ENCODE measurements at regions of chr11 and their contacts with region 1.

Region 1: DNA sequence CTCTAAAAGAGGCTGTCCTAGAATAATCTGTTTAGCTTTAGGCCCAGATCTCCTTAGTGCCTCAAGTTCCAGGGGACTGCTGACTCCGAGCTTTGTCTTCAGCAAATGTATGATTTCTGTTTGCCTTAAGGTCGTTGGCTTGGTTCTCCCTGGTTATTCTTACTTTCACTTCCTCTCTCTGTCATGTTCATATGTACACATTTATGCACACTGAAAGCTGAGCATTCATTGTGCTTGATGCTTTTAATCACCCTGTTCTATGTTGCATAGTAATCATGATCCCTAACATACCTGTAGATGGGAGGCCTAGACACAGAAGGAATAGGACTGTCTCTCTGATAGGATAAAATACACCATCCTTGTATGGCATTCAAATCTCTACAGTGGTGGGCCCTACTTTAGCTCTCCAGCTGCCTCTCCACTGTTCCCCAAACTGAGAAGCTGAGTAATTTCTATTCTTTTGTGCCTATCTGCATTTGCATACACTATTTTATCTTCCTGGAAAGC is 7.2 kb downstream of the PPFIBP2 start:
- DNase-seq: no peak
- ATAC-seq: peak; percentile 78
- H3K4me3 ChIP-seq: peak overlapping the region; percentile 71
- H3K27ac ChIP-seq: peak overlapping the region; percentile 100
- H3K4me1 ChIP-seq: peaks cover 58% of the 10 kb centered on the region
- H3K27me3 ChIP-seq: no peaks in the 10 kb centered on the region
- CTCF ChIP-seq: no peak
- EP300 ChIP-seq: peak in 1 of 2 experiments; percentile 70; a peak in 1 of 4 replicates
- POLR2A ChIP-seq: peak; percentile 50; the same call in 1 of the 2 replicates
- RAD21 ChIP-seq: no peak

Region 2: DNA sequence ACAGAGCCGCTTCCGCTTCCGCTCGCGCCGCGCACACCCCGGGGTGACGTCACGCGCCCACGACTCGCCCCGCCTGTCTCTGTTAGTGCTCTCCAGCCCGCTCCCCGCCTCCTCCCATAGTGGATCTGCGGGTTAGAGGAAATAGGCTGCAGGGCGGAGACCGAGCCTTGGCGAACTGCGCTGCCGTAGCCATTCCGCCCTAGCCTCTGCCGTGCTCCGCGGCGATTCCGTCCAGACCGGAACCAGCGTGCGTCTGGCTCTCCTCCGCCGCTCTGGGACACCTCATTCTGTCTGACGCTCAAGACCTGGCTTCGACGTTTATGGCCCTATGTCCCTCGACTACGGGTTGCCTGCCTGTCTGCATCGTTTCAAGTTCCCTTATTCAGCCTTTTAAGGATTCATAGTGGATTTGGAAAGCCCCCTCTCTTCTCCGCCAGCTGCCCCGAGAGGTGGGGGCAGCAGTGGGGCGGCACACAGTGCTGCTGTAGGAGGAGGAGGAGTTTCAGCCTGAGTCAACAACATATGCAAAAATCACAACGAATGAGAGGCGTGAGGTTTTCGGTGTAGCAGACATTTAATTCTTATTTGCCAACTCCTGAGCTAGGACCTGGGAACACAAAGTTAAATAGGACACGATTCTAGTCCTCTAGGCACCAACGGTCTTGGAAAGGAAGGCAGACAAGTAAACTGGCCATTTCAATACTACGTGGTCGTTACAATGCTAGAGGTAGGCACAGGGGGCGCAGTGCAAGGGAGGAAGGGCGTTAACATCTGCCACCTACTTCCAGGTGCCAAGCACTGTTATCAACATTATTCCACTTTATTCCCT is 908.6 kb before region 1 on chr11 and contains the start of gene TAF10:
- CTCF ChIA-PET with region 1: interaction called, 3 read pairs
- POLR2A ChIA-PET with region 1: no interaction called
- RAD21 ChIA-PET with region 1: no interaction called
- SMC1A ChIA-PET with region 1: no interaction called
- in situ Hi-C with region 1: loop called (anchors 10 kb)
- intact Hi-C with region 1: loop called (anchors 10 kb)
- DNase-seq: peak; percentile 77
- ATAC-seq: peak; percentile 92
- H3K4me3 ChIP-seq: peak within 1 kb of the TSS; percentile 87
- H3K27ac ChIP-seq: peak within 1 kb of the TSS; percentile 99
- H3K4me1 ChIP-seq: peaks cover 25% of the 10 kb centered on the region
- H3K27me3 ChIP-seq: no peaks in the 10 kb centered on the region
- CTCF ChIP-seq: peak; percentile 30 to 62 (median 42); a peak in 5 of 6 replicates
- EP300 ChIP-seq: no peak
- POLR2A ChIP-seq: peak; percentile 96
- RAD21 ChIP-seq: no peak
- polyA plus RNA-seq, gene TAF10: 27.2 to 78.9 TPM

Region 3: DNA sequence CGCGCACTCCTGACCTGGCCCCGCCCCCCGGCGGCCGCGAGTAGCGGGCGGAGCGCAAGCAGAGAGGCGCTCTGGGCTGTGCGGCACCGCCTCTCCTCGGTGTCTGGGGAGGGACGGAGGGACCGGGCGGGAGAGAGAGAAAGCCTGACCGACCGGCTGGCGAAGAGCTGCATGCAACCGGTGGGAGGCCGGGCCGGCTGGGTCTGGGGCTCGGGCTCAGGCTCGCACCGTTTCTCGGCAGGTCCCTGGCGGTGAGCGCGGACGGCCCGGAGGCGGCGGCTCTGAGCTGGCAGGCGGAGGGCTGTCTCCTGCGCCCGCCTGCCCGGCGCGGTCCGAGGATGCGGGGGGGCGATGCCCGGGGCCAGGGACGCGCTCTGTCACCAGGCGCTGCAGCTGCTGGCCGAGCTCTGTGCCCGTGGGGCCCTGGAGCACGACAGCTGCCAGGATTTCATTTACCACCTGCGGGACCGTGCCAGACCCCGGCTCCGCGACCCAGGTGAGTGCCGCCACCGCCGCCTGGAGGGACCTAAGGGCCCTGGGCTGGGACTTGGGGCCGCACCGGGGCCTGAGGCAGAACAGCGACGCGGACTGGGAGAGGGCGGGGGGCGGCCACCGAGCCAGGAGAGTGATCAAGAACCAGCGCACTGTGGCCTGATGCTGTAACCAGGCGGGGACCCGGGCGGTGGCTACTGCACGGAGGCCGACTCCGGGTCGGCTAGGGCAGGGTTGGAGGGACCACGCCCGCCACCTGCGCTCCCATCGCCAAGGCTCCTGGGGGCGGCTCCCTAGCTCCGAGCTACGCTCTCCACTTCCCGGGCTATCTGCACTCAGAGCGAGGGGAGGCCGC is 269.0 kb before region 1 on chr11 and contains the start of gene SYT9:
- CTCF ChIA-PET with region 1: no interaction called
- POLR2A ChIA-PET with region 1: no interaction called
- RAD21 ChIA-PET with region 1: no interaction called
- SMC1A ChIA-PET with region 1: no interaction called
- in situ Hi-C with region 1: no loop called
- intact Hi-C with region 1: no loop called
- DNase-seq: no peak
- ATAC-seq: peak; percentile 72
- H3K4me3 ChIP-seq: no peak within 1 kb of the TSS
- H3K27ac ChIP-seq: no peak within 1 kb of the TSS
- H3K4me1 ChIP-seq: no peaks in the 10 kb centered on the region
- H3K27me3 ChIP-seq: peaks cover 8 to 20% of the 10 kb centered on the region in 2 experiments
- CTCF ChIP-seq: no peak
- EP300 ChIP-seq: no peak
- POLR2A ChIP-seq: no peak
- RAD21 ChIP-seq: no peak
- polyA plus RNA-seq, gene SYT9: 0.03 TPM in 1 of 2 experiments, not detected in the other

Region 4: DNA sequence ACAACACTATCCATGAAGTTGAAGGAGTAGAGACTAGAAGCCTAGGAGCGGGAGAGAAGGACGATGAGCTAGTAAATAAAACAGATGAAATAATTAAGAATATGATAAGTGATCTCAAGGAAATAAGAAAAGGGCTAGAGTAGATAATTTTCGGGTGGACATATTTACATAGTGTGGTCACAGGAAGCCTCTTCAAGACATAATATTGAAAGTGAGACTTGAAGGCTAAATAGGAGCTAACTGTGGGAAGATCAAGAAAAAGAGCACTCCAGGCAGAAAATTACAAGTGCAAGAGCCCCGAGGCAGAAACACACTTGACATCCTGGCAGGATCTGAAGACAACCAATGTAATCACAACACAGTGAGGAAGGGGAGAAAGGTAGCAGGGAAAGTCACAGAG is 19.1 kb before region 1 on chr11:
- CTCF ChIA-PET with region 1: no interaction called
- POLR2A ChIA-PET with region 1: interaction called, 8 read pairs
- RAD21 ChIA-PET with region 1: interaction called, 4 read pairs
- SMC1A ChIA-PET with region 1: interaction called, 19 read pairs
- in situ Hi-C with region 1: no loop called
- intact Hi-C with region 1: no loop called
- DNase-seq: no peak
- ATAC-seq: peak; percentile 57
- H3K4me3 ChIP-seq: no peak overlapping the region
- H3K27ac ChIP-seq: no peak overlapping the region
- H3K4me1 ChIP-seq: peaks cover 14% of the 10 kb centered on the region; the same call in 1 of the 2 replicates
- H3K27me3 ChIP-seq: no peaks in the 10 kb centered on the region
- CTCF ChIP-seq: no peak
- EP300 ChIP-seq: no peak
- POLR2A ChIP-seq: no peak
- RAD21 ChIP-seq: no peak

Region 5: GRCh38 chr11:7548659-7549274 is 27.7 kb after region 1 on chr11:
- CTCF ChIA-PET with region 1: interaction called, 28 read pairs
- POLR2A ChIA-PET with region 1: interaction called, 7 read pairs
- RAD21 ChIA-PET with region 1: interaction called, 17 read pairs
- SMC1A ChIA-PET with region 1: interaction called, 60 read pairs
- in situ Hi-C with region 1: no loop called
- intact Hi-C with region 1: no loop called
- DNase-seq: no peak
- ATAC-seq: peak; percentile 97
- H3K4me3 ChIP-seq: no peak overlapping the region
- H3K27ac ChIP-seq: no peak overlapping the region; the same call in 1 of the 2 replicates
- H3K4me1 ChIP-seq: peaks cover 7% of the 10 kb centered on the region
- H3K27me3 ChIP-seq: no peaks in the 10 kb centered on the region
- CTCF ChIP-seq: peak; percentile 70 to 75 (median 74)
- EP300 ChIP-seq: no peak
- POLR2A ChIP-seq: no peak
- RAD21 ChIP-seq: peak; percentile 79

Region 6: DNA sequence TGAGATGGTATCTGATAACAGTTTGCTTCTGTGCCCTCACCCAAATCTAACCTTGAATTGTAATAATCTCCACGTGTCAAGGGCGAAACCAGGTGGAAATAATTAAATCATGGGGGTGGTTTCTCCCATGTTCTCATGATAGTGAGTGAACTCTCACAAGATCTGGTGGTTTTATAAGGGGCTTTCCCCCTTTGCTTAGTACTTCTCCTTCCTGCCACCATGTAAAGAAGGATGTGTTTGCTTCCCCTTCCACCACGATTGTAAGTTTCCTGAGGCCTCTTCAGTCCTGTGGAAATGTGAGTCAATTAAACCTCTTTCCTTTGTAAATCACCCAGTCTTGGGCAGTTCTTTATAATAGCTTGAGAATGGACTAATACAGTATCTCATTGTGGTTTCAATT is 193.8 kb after region 1 on chr11:
- CTCF ChIA-PET with region 1: no interaction called
- POLR2A ChIA-PET with region 1: no interaction called
- RAD21 ChIA-PET with region 1: no interaction called
- SMC1A ChIA-PET with region 1: no interaction called
- in situ Hi-C with region 1: no loop called
- intact Hi-C with region 1: no loop called
- DNase-seq: no peak
- ATAC-seq: no peak
- H3K4me3 ChIP-seq: no peak overlapping the region
- H3K27ac ChIP-seq: no peak overlapping the region
- H3K4me1 ChIP-seq: no peaks in the 10 kb centered on the region
- H3K27me3 ChIP-seq: no peaks in the 10 kb centered on the region
- CTCF ChIP-seq: no peak
- EP300 ChIP-seq: no peak
- POLR2A ChIP-seq: no peak
- RAD21 ChIP-seq: no peak

Measured in GM12878 (cell line).